ENCODE measurements at regions of chr6 and their contacts with region 1.

Region 1: GRCh38 chr6:36196880-36197548 is 470 bp downstream of the BRPF3 start:
- DNase-seq: peak; percentile 100
- H3K4me3 Mint-ChIP-seq: peak overlapping the region; percentile 95
- H3K27ac Mint-ChIP-seq: peak overlapping the region; percentile 92
- H3K4me1 Mint-ChIP-seq: peaks cover 33% of the 10 kb centered on the region
- H3K27me3 Mint-ChIP-seq: peaks cover 5% of the 10 kb centered on the region

Region 2: DNA sequence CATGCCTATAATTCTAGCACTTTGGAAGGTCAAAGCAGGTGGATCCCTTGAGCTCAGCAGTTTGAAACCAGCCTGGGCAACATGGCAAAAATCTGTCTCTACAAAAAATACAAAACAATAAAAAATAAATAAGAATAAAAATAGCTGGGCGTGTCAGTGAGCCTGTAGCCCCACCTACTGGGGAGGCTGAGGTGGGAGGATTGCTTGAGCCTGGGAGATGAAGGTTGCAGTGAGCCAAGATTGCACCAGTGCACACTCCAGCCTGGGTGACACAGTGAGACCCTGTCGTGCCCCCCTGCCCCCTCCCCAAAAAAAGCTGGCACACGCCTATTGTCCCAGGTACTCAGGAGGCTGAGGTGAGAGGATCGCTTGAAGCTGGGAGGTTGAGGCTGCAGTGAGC is 241.0 kb before region 1 on chr6:
- intact Hi-C with region 1: no loop called
- DNase-seq: no peak
- H3K4me3 Mint-ChIP-seq: no peak overlapping the region
- H3K27ac Mint-ChIP-seq: no peak overlapping the region
- H3K4me1 Mint-ChIP-seq: peaks cover 8% of the 10 kb centered on the region
- H3K27me3 Mint-ChIP-seq: peaks cover 22% of the 10 kb centered on the region

Region 3: GRCh38 chr6:36123257-36124139 is 73.5 kb before region 1 on chr6:
- intact Hi-C with region 1: loop called (anchors 1 kb)
- DNase-seq: peak; percentile 97
- H3K4me3 Mint-ChIP-seq: peak overlapping the region; percentile 46
- H3K27ac Mint-ChIP-seq: peak overlapping the region; percentile 79
- H3K4me1 Mint-ChIP-seq: peaks cover 72% of the 10 kb centered on the region
- H3K27me3 Mint-ChIP-seq: no peaks in the 10 kb centered on the region

Region 4: GRCh38 chr6:36131511-36132245 is 65.3 kb before region 1 on chr6:
- intact Hi-C with region 1: loop called (anchors 1 kb)
- DNase-seq: peak; percentile 85
- H3K4me3 Mint-ChIP-seq: peak overlapping the region; percentile 89
- H3K27ac Mint-ChIP-seq: peak overlapping the region; percentile 94
- H3K4me1 Mint-ChIP-seq: peaks cover 44% of the 10 kb centered on the region
- H3K27me3 Mint-ChIP-seq: no peaks in the 10 kb centered on the region

Region 5: DNA sequence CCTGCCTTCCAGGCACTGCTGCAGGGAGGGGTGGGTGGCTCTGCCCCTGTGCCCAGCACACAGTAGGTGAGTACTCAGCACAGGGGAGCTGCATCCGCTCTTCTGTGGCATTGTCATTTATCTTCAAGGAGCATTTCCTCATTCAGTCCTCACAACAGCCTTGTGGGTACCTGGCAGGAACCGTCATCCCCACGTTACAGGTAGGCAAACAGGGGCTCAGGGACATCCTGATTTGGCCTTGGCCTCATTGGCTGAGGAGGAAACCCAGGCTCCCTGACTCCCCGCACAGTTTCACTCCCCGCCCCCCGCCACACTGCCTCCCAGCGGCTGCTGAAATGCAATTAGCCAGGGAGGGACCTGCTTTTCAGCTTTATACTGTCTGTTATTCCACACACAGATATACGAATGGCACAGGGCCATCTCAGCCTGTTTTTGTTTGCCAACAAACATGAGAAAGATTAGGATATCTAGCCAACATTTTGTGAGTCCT is 48.6 kb after region 1 on chr6:
- intact Hi-C with region 1: no loop called
- DNase-seq: peak; percentile 66
- H3K4me3 Mint-ChIP-seq: no peak overlapping the region
- H3K27ac Mint-ChIP-seq: no peak overlapping the region
- H3K4me1 Mint-ChIP-seq: peaks cover 12% of the 10 kb centered on the region
- H3K27me3 Mint-ChIP-seq: peaks cover 28% of the 10 kb centered on the region

Region 6: GRCh38 chr6:36277946-36278470 is 81.0 kb after region 1 on chr6:
- intact Hi-C with region 1: no loop called
- DNase-seq: no peak
- H3K4me3 Mint-ChIP-seq: no peak overlapping the region
- H3K27ac Mint-ChIP-seq: no peak overlapping the region
- H3K4me1 Mint-ChIP-seq: no peaks in the 10 kb centered on the region
- H3K27me3 Mint-ChIP-seq: peaks cover 48% of the 10 kb centered on the region

Region 7: GRCh38 chr6:36423101-36423824 is 226.2 kb after region 1 on chr6:
- intact Hi-C with region 1: loop called (anchors 1 kb)
- DNase-seq: peak; percentile 99
- H3K4me3 Mint-ChIP-seq: peak overlapping the region; percentile 88
- H3K27ac Mint-ChIP-seq: peak overlapping the region; percentile 87
- H3K4me1 Mint-ChIP-seq: peaks cover 15% of the 10 kb centered on the region
- H3K27me3 Mint-ChIP-seq: peaks cover 5% of the 10 kb centered on the region